Activated CD4-positive, alpha-beta memory T cell treated with anti-CD3 and anti-CD28 coated beads for 36 hours (primary cell): ENCODE measurements at regions of chrX and their contacts with region 1.

Region 1: GRCh38 chrX:79107891-79108718 is 36.4 kb upstream of the GPR174 start:
- DNase-seq: no peak
- H3K4me3 Mint-ChIP-seq: peak overlapping the region; percentile 52
- H3K27ac Mint-ChIP-seq: peak overlapping the region; percentile 96
- H3K4me1 Mint-ChIP-seq: peaks cover 61% of the 10 kb centered on the region
- H3K27me3 Mint-ChIP-seq: no peaks in the 10 kb centered on the region

Region 2: GRCh38 chrX:78321809-78322208 is 786.3 kb before region 1 on chrX:
- CTCF ChIA-PET with region 1: no interaction called
- POLR2A ChIA-PET with region 1: no interaction called
- intact Hi-C with region 1: loop called (anchors 10 kb)
- DNase-seq: peak; percentile 64
- H3K4me3 Mint-ChIP-seq: peak overlapping the region; percentile 45
- H3K27ac Mint-ChIP-seq: peak overlapping the region; percentile 81
- H3K4me1 Mint-ChIP-seq: peaks cover 32% of the 10 kb centered on the region
- H3K27me3 Mint-ChIP-seq: no peaks in the 10 kb centered on the region

Region 3: GRCh38 chrX:79096145-79096556 is 12.0 kb before region 1 on chrX:
- CTCF ChIA-PET with region 1: no interaction called
- POLR2A ChIA-PET with region 1: no interaction called
- intact Hi-C with region 1: loop called (anchors 1 kb)
- DNase-seq: no peak
- H3K4me3 Mint-ChIP-seq: peak overlapping the region; percentile 60
- H3K27ac Mint-ChIP-seq: peak overlapping the region; percentile 89
- H3K4me1 Mint-ChIP-seq: peaks cover 77% of the 10 kb centered on the region
- H3K27me3 Mint-ChIP-seq: no peaks in the 10 kb centered on the region

Region 4: DNA sequence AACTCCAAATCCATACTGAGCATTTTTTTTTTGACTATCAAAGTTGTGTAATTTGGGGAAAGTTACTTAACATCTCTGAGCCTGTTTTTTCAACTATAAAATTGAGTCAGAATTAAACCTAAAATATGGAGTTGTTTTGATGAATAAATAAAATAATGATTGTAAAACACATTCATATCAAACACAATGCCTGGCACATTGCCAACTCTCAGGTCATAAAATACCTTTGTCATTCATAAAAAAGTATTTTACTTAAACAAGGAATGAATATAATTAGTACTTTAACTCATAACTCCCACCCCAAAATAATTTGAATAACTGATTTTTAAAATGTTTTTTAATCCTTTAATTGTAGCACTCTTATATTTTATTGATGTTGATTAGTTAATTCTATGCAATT is 32.6 kb after region 1 on chrX:
- CTCF ChIA-PET with region 1: interaction called, 3 read pairs
- POLR2A ChIA-PET with region 1: no interaction called
- intact Hi-C with region 1: loop called (anchors 5 kb)
- DNase-seq: no peak
- H3K4me3 Mint-ChIP-seq: no peak overlapping the region
- H3K27ac Mint-ChIP-seq: no peak overlapping the region
- H3K4me1 Mint-ChIP-seq: peaks cover 38% of the 10 kb centered on the region
- H3K27me3 Mint-ChIP-seq: no peaks in the 10 kb centered on the region